H1 (cell line): ENCODE measurements at regions of chr16 and their contacts with region 1.

Region 1: GRCh38 chr16:85253084-85253941 is 141.0 kb upstream of the CIBAR2 start:
- DNase-seq: peak in 1 of 2 experiments; percentile 95
- H3K4me3 ChIP-seq: no peak overlapping the region
- H3K27ac ChIP-seq: peak overlapping the region; percentile 14; the same call in 1 of the 2 replicates
- H3K4me1 ChIP-seq: peaks cover 0 to 11% (median 2%) of the 10 kb centered on the region in 4 experiments; a peak in 4 of 7 replicates
- H3K27me3 ChIP-seq: no peaks in the 10 kb centered on the region
- CTCF ChIP-seq: peak; percentile 96 to 99 (median 98)
- EP300 ChIP-seq: no peak
- POLR2A ChIP-seq: no peak
- RAD21 ChIP-seq: peak; percentile 65 to 81

Region 2: DNA sequence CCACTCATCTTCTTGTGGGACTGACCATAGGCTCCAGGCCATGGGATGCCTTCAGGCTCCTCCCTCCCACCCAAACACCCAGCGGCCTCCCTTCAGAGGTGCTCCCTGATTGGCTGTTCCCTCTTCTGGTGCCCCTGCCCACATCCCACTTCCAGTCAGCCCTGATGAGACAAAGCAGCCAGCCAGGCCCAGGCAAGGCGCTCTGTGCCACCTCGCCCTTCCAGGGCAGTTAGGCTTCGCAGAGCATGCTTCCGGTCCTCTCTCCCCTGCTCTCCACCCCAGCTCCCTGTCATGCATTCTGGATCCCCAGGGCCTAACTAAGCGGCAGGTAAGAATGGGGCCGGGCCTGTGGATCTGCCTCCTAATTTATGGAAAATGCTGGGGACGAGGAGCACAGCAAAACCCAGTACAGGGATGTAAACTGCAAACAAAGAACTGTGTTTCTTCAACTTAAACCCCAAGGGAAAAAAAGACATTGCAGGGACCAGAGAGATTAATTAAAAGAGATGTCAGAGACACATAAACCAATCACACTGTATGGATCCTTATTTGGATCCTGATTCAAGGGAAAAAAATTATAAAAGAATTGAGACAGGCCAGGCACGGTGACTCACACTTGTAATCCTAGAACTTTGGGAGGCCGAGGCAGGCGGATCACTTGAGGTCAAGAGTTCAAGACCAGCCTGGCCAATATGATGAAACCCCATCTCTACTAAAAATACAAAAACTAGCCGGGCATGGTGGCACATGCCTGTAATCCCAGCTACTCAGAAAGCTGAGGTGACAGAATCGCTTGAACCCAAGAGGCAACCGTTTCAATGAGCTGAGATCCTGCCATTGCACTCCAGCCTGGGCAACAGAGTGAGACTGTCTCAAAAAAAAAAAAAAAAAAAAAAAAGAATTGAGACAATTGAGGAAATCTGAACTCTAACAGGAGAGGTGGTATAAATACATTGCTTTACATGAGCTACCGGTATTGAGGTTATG is 267.9 kb before region 1 on chr16:
- CTCF ChIA-PET with region 1: no interaction called
- POLR2A ChIA-PET with region 1: no interaction called
- DNase-seq: no peak
- H3K4me3 ChIP-seq: no peak overlapping the region
- H3K27ac ChIP-seq: no peak overlapping the region
- H3K4me1 ChIP-seq: no peaks in the 10 kb centered on the region
- H3K27me3 ChIP-seq: no peaks in the 10 kb centered on the region
- CTCF ChIP-seq: no peak
- EP300 ChIP-seq: no peak
- POLR2A ChIP-seq: no peak
- RAD21 ChIP-seq: no peak

Region 3: GRCh38 chr16:85172455-85173145 is 80.7 kb before region 1 on chr16:
- CTCF ChIA-PET with region 1: interaction called, 39 read pairs
- POLR2A ChIA-PET with region 1: no interaction called
- DNase-seq: peak in 1 of 2 experiments; percentile 70
- H3K4me3 ChIP-seq: peak overlapping the region in 2 of 4 experiments; percentile 14; a peak in 1 of 8 replicates
- H3K27ac ChIP-seq: no peak overlapping the region
- H3K4me1 ChIP-seq: peaks cover 6 to 41% (median 18%) of the 10 kb centered on the region in 4 experiments
- H3K27me3 ChIP-seq: peaks cover 1 to 22% (median 15%) of the 10 kb centered on the region in 4 experiments; a peak in 6 of 7 replicates
- CTCF ChIP-seq: peak; percentile 66 to 89 (median 69)
- EP300 ChIP-seq: no peak
- POLR2A ChIP-seq: no peak
- RAD21 ChIP-seq: peak; percentile 23 to 45; a peak in 2 of 4 replicates

Region 4: GRCh38 chr16:85202631-85203461 is 50.5 kb before region 1 on chr16:
- CTCF ChIA-PET with region 1: interaction called, 14 read pairs
- POLR2A ChIA-PET with region 1: no interaction called
- DNase-seq: no peak
- H3K4me3 ChIP-seq: no peak overlapping the region
- H3K27ac ChIP-seq: peak overlapping the region; percentile 51; the same call in 1 of the 2 replicates
- H3K4me1 ChIP-seq: peaks cover 3 to 41% (median 30%) of the 10 kb centered on the region in 4 experiments
- H3K27me3 ChIP-seq: no peaks in the 10 kb centered on the region; a peak in 1 of 7 replicates
- CTCF ChIP-seq: no peak
- EP300 ChIP-seq: no peak
- POLR2A ChIP-seq: no peak; a peak in 1 of 3 replicates
- RAD21 ChIP-seq: no peak

Region 5: DNA sequence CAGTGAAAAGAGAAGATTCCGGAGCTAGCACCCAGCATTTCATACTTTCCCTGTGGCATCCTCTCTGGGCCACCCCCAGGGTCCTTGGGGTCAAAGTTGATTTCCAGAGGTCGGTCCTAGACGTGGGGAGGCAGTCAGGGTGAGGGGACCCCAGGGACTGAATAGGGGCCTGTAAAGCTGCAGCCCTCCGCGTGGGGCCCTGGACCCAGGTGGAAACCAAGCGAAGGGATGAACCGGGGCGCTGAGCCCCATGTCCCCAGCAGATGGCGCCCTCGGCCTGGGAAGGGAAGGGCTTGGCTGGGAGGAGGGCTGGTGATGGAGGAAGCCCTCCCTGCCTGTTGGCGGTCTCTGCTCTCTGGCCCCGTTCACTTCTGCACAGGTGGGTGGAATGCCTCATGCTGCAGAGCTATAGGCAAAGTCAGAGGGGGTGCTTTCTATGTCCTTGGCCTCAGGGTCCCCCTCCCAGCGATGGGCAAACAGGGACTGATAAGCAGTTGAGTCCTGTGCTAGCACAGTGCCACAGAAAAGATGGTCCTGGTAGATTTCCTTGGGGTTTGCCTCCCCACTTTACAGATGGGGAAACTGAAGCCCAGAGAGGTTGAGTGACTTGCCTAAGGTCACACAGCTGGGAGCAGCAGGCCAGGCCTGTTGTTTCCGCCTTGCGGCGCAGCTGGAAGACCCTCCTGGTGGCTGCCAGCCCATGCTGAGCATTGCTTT is 22.4 kb after region 1 on chr16:
- CTCF ChIA-PET with region 1: interaction called, 66 read pairs
- POLR2A ChIA-PET with region 1: interaction called, 3 read pairs
- DNase-seq: peak in 1 of 2 experiments; percentile 96
- H3K4me3 ChIP-seq: no peak overlapping the region
- H3K27ac ChIP-seq: no peak overlapping the region
- H3K4me1 ChIP-seq: peaks cover 0 to 15% (median 4%) of the 10 kb centered on the region in 4 experiments; a peak in 4 of 7 replicates
- H3K27me3 ChIP-seq: peaks cover 0 to under 1% (median 0%) of the 10 kb centered on the region in 4 experiments; a peak in 1 of 7 replicates
- CTCF ChIP-seq: peak; percentile 96 to 99 (median 97)
- EP300 ChIP-seq: no peak
- POLR2A ChIP-seq: no peak
- RAD21 ChIP-seq: peak; percentile 91 to 93

Region 6: GRCh38 chr16:85296859-85297660 is 43.7 kb after region 1 on chr16:
- CTCF ChIA-PET with region 1: interaction called, 26 read pairs
- POLR2A ChIA-PET with region 1: no interaction called
- DNase-seq: peak in 1 of 2 experiments; percentile 87
- H3K4me3 ChIP-seq: no peak overlapping the region
- H3K27ac ChIP-seq: no peak overlapping the region
- H3K4me1 ChIP-seq: no peaks in the 10 kb centered on the region
- H3K27me3 ChIP-seq: no peaks in the 10 kb centered on the region; a peak in 1 of 7 replicates
- CTCF ChIP-seq: peak; percentile 91 to 93 (median 91)
- EP300 ChIP-seq: no peak
- POLR2A ChIP-seq: no peak
- RAD21 ChIP-seq: peak; percentile 49 to 68; a peak in 3 of 4 replicates